IMR-90 (cell line): ENCODE measurements at regions of chr1 and their contacts with region 1.

Region 1: GRCh38 chr1:9784508-9785133 is 39.1 kb downstream of the CLSTN1 start:
- DNase-seq: peak; percentile 68
- ATAC-seq: peak; percentile 66
- H3K4me3 ChIP-seq: no peak overlapping the region
- H3K27ac ChIP-seq: no peak overlapping the region
- H3K4me1 ChIP-seq: peaks cover 2% of the 10 kb centered on the region; the same call in 1 of the 2 replicates
- H3K27me3 ChIP-seq: no peaks in the 10 kb centered on the region
- CTCF ChIP-seq: peak; percentile 70
- POLR2A ChIP-seq: no peak
- RAD21 ChIP-seq: peak; percentile 84

Region 2: DNA sequence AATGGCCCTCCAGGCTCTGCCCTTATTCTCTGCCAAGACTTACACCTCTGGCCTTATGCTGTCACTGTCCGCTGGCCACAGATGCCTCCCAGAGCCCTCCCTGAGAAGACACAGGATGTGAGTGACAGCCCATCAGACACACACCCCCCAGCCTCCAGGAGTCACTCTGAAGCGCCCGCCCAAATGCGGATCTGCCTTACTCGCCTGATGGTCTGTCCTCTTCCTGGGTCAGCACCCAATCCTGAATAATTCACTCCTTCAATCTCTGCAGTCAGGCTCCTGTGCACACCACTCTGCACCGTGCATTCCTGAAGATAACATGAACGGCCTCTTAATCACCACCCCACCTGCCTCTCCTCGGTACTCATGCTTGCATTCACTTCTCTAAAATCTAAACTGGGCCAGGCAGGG is 24.5 kb after region 1 on chr1:
- CTCF ChIA-PET with region 1: no interaction called
- POLR2A ChIA-PET with region 1: no interaction called
- dilution Hi-C with region 1: no loop called
- in situ Hi-C with region 1: no loop called
- intact Hi-C with region 1: no loop called
- DNase-seq: no peak
- ATAC-seq: peak; percentile 37; the same call in 1 of the 2 replicates
- H3K4me3 ChIP-seq: no peak overlapping the region
- H3K27ac ChIP-seq: no peak overlapping the region
- H3K4me1 ChIP-seq: peaks cover 7% of the 10 kb centered on the region; the same call in 1 of the 2 replicates
- H3K27me3 ChIP-seq: no peaks in the 10 kb centered on the region
- CTCF ChIP-seq: no peak
- POLR2A ChIP-seq: no peak
- RAD21 ChIP-seq: no peak

Region 3: GRCh38 chr1:9823943-9824701 is 39.5 kb after region 1 on chr1 and contains the start of gene CLSTN1:
- CTCF ChIA-PET with region 1: no interaction called
- POLR2A ChIA-PET with region 1: no interaction called
- dilution Hi-C with region 1: no loop called
- in situ Hi-C with region 1: no loop called
- intact Hi-C with region 1: loop called (anchors 5 kb)
- DNase-seq: peak; percentile 81
- ATAC-seq: peak; percentile 87
- H3K4me3 ChIP-seq: peak within 1 kb of the TSS; percentile 94
- H3K27ac ChIP-seq: peak within 1 kb of the TSS; percentile 39
- H3K4me1 ChIP-seq: 0 out of 2 replicates have a peak, but pooled peaks cover 2% of the 10 kb centered on the region
- H3K27me3 ChIP-seq: no peaks in the 10 kb centered on the region
- CTCF ChIP-seq: no peak
- POLR2A ChIP-seq: no peak
- RAD21 ChIP-seq: no peak
- total RNA-seq, gene CLSTN1: 30.1 and 31.9 TPM in 2 replicates

Region 4: DNA sequence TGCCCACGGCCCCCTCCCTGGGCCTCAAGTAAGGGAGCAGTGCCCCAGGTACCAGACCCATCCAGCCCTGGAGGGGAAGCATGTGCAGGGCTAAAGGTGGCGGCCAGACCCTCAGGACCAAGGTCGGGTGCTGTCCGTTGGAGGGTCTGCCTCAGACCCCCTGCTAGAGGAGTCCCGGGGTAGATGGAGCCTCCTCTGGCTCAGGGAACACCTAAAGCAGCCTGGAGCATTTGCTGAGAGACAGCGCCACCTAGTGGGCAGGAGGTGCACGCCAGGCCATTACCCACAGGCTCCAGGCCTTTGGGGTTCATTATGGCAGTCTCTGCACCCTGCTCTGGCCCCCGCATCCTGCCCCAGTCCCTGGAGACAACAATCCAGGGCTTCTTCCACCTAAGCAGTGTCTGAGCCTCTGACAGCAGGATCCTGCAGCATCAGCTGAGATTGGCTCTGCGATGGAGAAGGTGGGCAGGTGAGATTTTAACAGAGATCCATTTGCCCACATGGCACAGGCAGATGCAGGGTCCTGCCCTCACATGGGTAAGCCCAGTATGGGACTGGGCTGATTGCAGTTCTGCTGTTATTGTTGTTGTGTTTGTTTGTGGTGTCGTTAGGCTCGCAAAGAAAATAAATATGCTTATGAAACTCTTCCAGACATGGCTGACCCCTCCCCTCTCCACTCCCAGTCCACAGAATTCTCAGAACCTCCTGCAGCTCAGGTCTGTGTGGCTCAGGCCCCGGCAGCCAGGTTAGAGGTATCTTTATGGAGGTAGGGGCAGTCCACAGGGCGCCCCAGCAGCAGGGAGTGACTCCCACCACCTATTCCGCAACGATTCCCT is 83.0 kb after region 1 on chr1:
- CTCF ChIA-PET with region 1: interaction called, 6 read pairs
- POLR2A ChIA-PET with region 1: no interaction called
- dilution Hi-C with region 1: no loop called
- in situ Hi-C with region 1: loop called (anchors 5 kb)
- intact Hi-C with region 1: loop called (anchors 1 kb)
- DNase-seq: peak; percentile 57
- ATAC-seq: peak; percentile 98
- H3K4me3 ChIP-seq: no peak overlapping the region
- H3K27ac ChIP-seq: no peak overlapping the region
- H3K4me1 ChIP-seq: peaks cover 2% of the 10 kb centered on the region
- H3K27me3 ChIP-seq: no peaks in the 10 kb centered on the region
- CTCF ChIP-seq: peak; percentile 97
- POLR2A ChIP-seq: peak; percentile 61
- RAD21 ChIP-seq: peak; percentile 99

Region 5: GRCh38 chr1:10415211-10415930 is 630.8 kb after region 1 on chr1:
- CTCF ChIA-PET with region 1: no interaction called
- POLR2A ChIA-PET with region 1: interaction called, 29 read pairs
- dilution Hi-C with region 1: no loop called
- in situ Hi-C with region 1: no loop called
- intact Hi-C with region 1: no loop called
- DNase-seq: peak; percentile 91
- ATAC-seq: peak; percentile 92
- H3K4me3 ChIP-seq: no peak overlapping the region
- H3K27ac ChIP-seq: peak overlapping the region; percentile 95
- H3K4me1 ChIP-seq: peaks cover 3% of the 10 kb centered on the region
- H3K27me3 ChIP-seq: no peaks in the 10 kb centered on the region
- CTCF ChIP-seq: no peak
- POLR2A ChIP-seq: peak; percentile 66
- RAD21 ChIP-seq: no peak